Activated CD4-positive, alpha-beta memory T cell treated with anti-CD3 and anti-CD28 coated beads, Interleukin-2, amount 10 ng/mL, durations not matched to agents 7 days and 5 days (primary cell): ENCODE measurements at regions of chr15 and their contacts with region 1.

Region 1: GRCh38 chr15:51192521-51193280 is 98.0 kb upstream of the TNFAIP8L3 start:
- DNase-seq: peak; percentile 76
- H3K4me3 Mint-ChIP-seq: no peak overlapping the region
- H3K27ac Mint-ChIP-seq: no peak overlapping the region
- H3K4me1 Mint-ChIP-seq: no peaks in the 10 kb centered on the region
- H3K27me3 Mint-ChIP-seq: peaks cover 31% of the 10 kb centered on the region

Region 2: DNA sequence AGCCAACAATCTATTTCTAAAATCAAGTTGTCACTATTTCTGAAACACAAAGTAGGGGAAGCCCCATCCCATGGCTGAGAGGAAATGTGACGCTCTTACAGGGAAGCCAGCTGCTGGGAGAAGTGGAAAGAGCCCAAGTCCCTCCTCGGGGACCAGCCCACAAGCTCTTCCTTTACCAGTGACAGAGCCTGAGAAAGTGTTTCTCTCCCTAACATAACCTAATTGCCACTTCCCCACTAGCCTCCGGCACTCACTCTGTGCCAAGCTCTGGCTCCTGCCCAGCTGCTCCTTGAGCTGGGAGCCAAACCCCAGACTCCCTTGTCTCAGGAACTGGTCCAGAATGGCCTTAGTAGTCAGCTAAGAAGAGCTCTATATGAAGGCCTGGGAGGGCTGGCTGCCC is 140.9 kb before region 1 on chr15:
- CTCF ChIA-PET with region 1: no interaction called
- POLR2A ChIA-PET with region 1: no interaction called
- DNase-seq: no peak
- H3K4me3 Mint-ChIP-seq: no peak overlapping the region
- H3K27ac Mint-ChIP-seq: no peak overlapping the region
- H3K4me1 Mint-ChIP-seq: peaks cover 2% of the 10 kb centered on the region
- H3K27me3 Mint-ChIP-seq: peaks cover 15% of the 10 kb centered on the region

Region 3: DNA sequence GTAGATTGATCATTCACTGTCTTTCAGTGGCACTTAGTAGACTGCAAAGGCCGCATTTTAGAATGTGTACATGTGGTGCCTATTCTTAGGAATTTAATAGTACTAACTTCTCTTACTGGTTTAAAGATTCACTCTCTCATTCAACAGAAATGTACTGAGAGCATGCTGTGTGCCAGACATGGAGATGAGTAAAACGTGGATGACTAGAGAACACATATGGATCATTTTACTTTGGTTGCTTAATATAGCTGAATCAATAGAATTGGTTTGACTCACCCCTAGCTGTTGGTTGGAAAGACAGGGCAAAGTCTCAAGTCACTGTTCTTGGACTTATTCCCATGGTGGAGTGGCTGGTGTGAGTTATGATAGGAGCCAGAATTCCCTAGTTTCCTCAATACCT is 11.1 kb after region 1 on chr15:
- CTCF ChIA-PET with region 1: interaction called, 15 read pairs
- POLR2A ChIA-PET with region 1: no interaction called
- DNase-seq: no peak
- H3K4me3 Mint-ChIP-seq: no peak overlapping the region
- H3K27ac Mint-ChIP-seq: no peak overlapping the region
- H3K4me1 Mint-ChIP-seq: no peaks in the 10 kb centered on the region
- H3K27me3 Mint-ChIP-seq: peaks cover 25% of the 10 kb centered on the region